Heart right ventricle (tissue), 16 donors: ENCODE measurements at regions of chr4 and their contacts with region 1.

Region 1: GRCh38 chr4:71713611-71714203 is 70.2 kb downstream of the GC start:
- DNase-seq: peak in 1 of 2 donors; percentile 5
- ATAC-seq: no peak
- H3K4me3 ChIP-seq: no peak overlapping the region
- H3K27ac ChIP-seq: no peak overlapping the region
- H3K4me1 ChIP-seq: no peaks in the 10 kb centered on the region
- H3K27me3 ChIP-seq: no peaks in the 10 kb centered on the region
- CTCF ChIP-seq: peak; percentile 16 to 70 (median 56)

Region 2: GRCh38 chr4:70601422-70602039 is 1112.2 kb before region 1 on chr4:
- intact Hi-C with region 1: loop called in 3 of 10 experiments (anchors 2 to 10 kb)
- DNase-seq: peak; percentile 10 to 15
- ATAC-seq: peak in 1 of 8 donors; percentile 77
- H3K4me3 ChIP-seq: no peak overlapping the region
- H3K27ac ChIP-seq: no peak overlapping the region
- H3K4me1 ChIP-seq: no peaks in the 10 kb centered on the region
- H3K27me3 ChIP-seq: peaks cover 0 to 7% (median 0%) of the 10 kb centered on the region in 7 donors
- CTCF ChIP-seq: peak; percentile 16 to 72 (median 61)

Region 3: GRCh38 chr4:70651864-70652506 is 1061.7 kb before region 1 on chr4:
- intact Hi-C with region 1: loop called in 1 of 10 experiments (anchors 5 kb)
- DNase-seq: no peak
- ATAC-seq: peak in 5 of 8 donors; percentile 38 to 68 (median 48)
- H3K4me3 ChIP-seq: no peak overlapping the region
- H3K27ac ChIP-seq: no peak overlapping the region
- H3K4me1 ChIP-seq: peaks cover 0 to 3% (median 0%) of the 10 kb centered on the region in 9 donors
- H3K27me3 ChIP-seq: peaks cover 0 to 5% (median 0%) of the 10 kb centered on the region in 7 donors
- CTCF ChIP-seq: peak; percentile 28 to 72 (median 58)

Region 4: GRCh38 chr4:71130827-71131603 is 582.7 kb before region 1 on chr4:
- intact Hi-C with region 1: loop called in 1 of 10 experiments (anchors 5 kb)
- DNase-seq: no peak
- ATAC-seq: no peak
- H3K4me3 ChIP-seq: no peak overlapping the region
- H3K27ac ChIP-seq: no peak overlapping the region
- H3K4me1 ChIP-seq: no peaks in the 10 kb centered on the region
- H3K27me3 ChIP-seq: no peaks in the 10 kb centered on the region
- CTCF ChIP-seq: peak in 4 of 9 donors; percentile 13 to 32 (median 30)

Region 5: GRCh38 chr4:71338846-71339593 is 374.7 kb before region 1 on chr4 and contains the start of gene SLC4A4:
- intact Hi-C with region 1: no loop called
- DNase-seq: no peak
- ATAC-seq: no peak
- H3K4me3 ChIP-seq: no peak within 1 kb of the TSS
- H3K27ac ChIP-seq: no peak within 1 kb of the TSS
- H3K4me1 ChIP-seq: no peaks in the 10 kb centered on the region
- H3K27me3 ChIP-seq: no peaks in the 10 kb centered on the region
- CTCF ChIP-seq: no peak
- total RNA-seq, gene SLC4A4: 12.3 to 34.5 (median 27.4) TPM

Region 6: GRCh38 chr4:72987741-72988729 is 1274.3 kb after region 1 on chr4:
- intact Hi-C with region 1: no loop called
- DNase-seq: no peak
- ATAC-seq: no peak
- H3K4me3 ChIP-seq: no peak overlapping the region
- H3K27ac ChIP-seq: no peak overlapping the region
- H3K4me1 ChIP-seq: no peaks in the 10 kb centered on the region
- H3K27me3 ChIP-seq: no peaks in the 10 kb centered on the region
- CTCF ChIP-seq: peak in 2 of 9 donors; percentile 7 to 19